GM12878 (cell line): ENCODE measurements at regions of chr15 and their contacts with region 1.

Region 1: DNA sequence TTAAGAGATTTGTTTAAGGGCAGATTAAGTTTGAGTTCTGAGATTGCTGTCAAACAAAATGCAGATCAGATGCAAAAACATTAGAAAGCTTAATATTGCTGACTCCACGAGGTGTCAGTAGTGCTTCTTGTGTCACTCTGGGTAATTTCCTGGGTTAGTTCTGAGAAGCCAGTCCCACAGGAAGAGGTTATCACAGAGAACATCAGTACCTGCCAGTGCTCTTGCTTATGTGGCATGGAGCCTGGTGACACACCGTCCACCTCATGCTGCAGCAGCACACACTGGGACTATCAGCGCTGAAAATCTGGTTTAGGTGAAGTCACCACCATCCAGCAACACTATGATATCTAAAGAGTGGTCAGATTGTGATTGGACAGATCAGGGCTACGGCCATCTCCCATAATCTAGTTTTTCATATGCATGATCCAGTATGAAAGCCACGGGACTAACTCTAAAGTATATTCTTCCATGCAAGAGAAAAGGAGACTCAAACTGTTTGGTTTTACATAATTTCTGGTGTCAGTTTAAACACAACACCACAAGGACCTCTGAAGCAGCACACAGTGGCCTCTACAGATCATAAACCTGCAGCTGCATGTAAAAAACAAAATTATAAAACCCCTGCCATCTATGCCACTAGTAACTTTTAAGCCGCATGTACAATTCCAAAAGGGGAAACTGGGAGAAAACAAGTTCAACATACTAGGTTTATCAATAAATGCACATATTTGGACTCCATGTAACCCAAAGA is 36.1 kb upstream of the MYO5C start:
- DNase-seq: peak; percentile 87
- ATAC-seq: peak; percentile 99
- H3K4me3 ChIP-seq: no peak overlapping the region
- H3K27ac ChIP-seq: peak overlapping the region; percentile 22
- H3K4me1 ChIP-seq: peaks cover 15% of the 10 kb centered on the region
- H3K27me3 ChIP-seq: no peaks in the 10 kb centered on the region
- CTCF ChIP-seq: peak; percentile 59 to 90 (median 78)
- EP300 ChIP-seq: no peak
- POLR2A ChIP-seq: no peak
- RAD21 ChIP-seq: peak; percentile 96

Region 2: GRCh38 chr15:52256366-52256765 is 75.3 kb before region 1 on chr15:
- CTCF ChIA-PET with region 1: interaction called, 52 read pairs
- POLR2A ChIA-PET with region 1: no interaction called
- RAD21 ChIA-PET with region 1: interaction called, 18 read pairs
- SMC1A ChIA-PET with region 1: interaction called, 33 read pairs
- in situ Hi-C with region 1: no loop called
- intact Hi-C with region 1: loop called (anchors 2 kb)
- DNase-seq: peak; percentile 76
- ATAC-seq: peak; percentile 71
- H3K4me3 ChIP-seq: no peak overlapping the region
- H3K27ac ChIP-seq: no peak overlapping the region
- H3K4me1 ChIP-seq: peaks cover 12% of the 10 kb centered on the region
- H3K27me3 ChIP-seq: no peaks in the 10 kb centered on the region
- CTCF ChIP-seq: peak; percentile 68 to 82 (median 71)
- EP300 ChIP-seq: no peak
- POLR2A ChIP-seq: no peak
- RAD21 ChIP-seq: peak; percentile 88

Region 3: GRCh38 chr15:52379395-52380106 is 47.9 kb after region 1 on chr15:
- CTCF ChIA-PET with region 1: interaction called, 3 read pairs
- POLR2A ChIA-PET with region 1: no interaction called
- RAD21 ChIA-PET with region 1: interaction called, 16 read pairs
- SMC1A ChIA-PET with region 1: interaction called, 6 read pairs
- in situ Hi-C with region 1: no loop called
- intact Hi-C with region 1: no loop called
- DNase-seq: peak; percentile 91
- ATAC-seq: peak; percentile 71
- H3K4me3 ChIP-seq: peak overlapping the region; percentile 60
- H3K27ac ChIP-seq: peak overlapping the region; percentile 98
- H3K4me1 ChIP-seq: peaks cover 54% of the 10 kb centered on the region
- H3K27me3 ChIP-seq: no peaks in the 10 kb centered on the region
- CTCF ChIP-seq: 0 out of 6 replicates have a peak, but pooled peaks of 1 of the 3 experiments have one; percentile 6
- EP300 ChIP-seq: peak; percentile 42 to 68; a peak in 3 of 4 replicates
- POLR2A ChIP-seq: peak; percentile 56
- RAD21 ChIP-seq: no peak

Region 4: DNA sequence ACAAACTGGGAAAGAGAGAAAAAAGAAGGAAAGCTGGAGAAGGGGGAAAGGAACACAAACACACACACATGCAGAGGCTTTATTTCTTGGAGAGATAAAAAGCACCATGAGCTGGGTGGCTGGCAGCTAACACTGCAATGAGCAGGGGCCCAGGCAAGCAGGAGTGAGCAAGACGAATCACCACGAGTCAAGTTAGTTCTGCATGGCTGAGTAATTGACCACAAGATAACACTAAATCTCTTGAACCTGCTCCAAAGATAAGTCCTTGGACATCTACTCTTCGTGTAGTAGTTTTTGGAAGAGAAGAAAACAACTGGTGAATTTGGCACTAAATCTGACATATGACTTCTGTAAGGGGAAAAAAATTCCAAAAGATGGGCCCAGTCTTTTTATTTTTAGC is 96.1 kb after region 1 on chr15:
- CTCF ChIA-PET with region 1: no interaction called
- POLR2A ChIA-PET with region 1: no interaction called
- RAD21 ChIA-PET with region 1: no interaction called
- SMC1A ChIA-PET with region 1: no interaction called
- in situ Hi-C with region 1: no loop called
- intact Hi-C with region 1: no loop called
- DNase-seq: no peak
- ATAC-seq: peak; percentile 81
- H3K4me3 ChIP-seq: no peak overlapping the region
- H3K27ac ChIP-seq: no peak overlapping the region
- H3K4me1 ChIP-seq: no peaks in the 10 kb centered on the region; the same call in 1 of the 2 replicates
- H3K27me3 ChIP-seq: no peaks in the 10 kb centered on the region
- CTCF ChIP-seq: no peak
- EP300 ChIP-seq: no peak
- POLR2A ChIP-seq: no peak
- RAD21 ChIP-seq: no peak

Region 5: GRCh38 chr15:52558196-52558595 is 226.5 kb after region 1 on chr15:
- CTCF ChIA-PET with region 1: interaction called, 5 read pairs
- POLR2A ChIA-PET with region 1: interaction called, 4 read pairs
- RAD21 ChIA-PET with region 1: interaction called, 10 read pairs
- SMC1A ChIA-PET with region 1: interaction called, 11 read pairs
- in situ Hi-C with region 1: no loop called
- intact Hi-C with region 1: no loop called
- DNase-seq: peak; percentile 84
- ATAC-seq: peak; percentile 83
- H3K4me3 ChIP-seq: peak overlapping the region; percentile 50; the same call in 1 of the 2 replicates
- H3K27ac ChIP-seq: peak overlapping the region; percentile 85
- H3K4me1 ChIP-seq: peaks cover 33% of the 10 kb centered on the region
- H3K27me3 ChIP-seq: no peaks in the 10 kb centered on the region
- CTCF ChIP-seq: no peak
- EP300 ChIP-seq: no peak
- POLR2A ChIP-seq: no peak
- RAD21 ChIP-seq: no peak

Region 6: DNA sequence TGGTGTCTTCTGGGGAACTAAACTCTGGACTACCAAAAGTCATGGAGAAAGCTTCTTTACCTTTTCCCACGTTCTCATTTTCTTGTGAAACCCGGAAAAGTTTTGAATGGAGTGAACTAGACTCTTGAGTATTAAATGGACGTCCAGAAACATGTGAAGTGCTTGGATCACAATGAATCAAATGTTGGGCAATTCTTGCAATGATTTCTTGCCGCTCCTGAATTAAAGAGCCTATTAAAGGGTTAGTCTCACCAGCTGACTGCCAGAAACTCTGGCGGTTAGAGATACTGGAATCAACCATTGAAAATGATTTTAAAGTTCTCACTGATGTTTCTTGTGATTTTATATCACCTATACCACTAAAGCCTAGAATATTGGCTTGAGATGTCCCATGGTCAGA is 277.9 kb after region 1 on chr15:
- CTCF ChIA-PET with region 1: no interaction called
- POLR2A ChIA-PET with region 1: no interaction called
- RAD21 ChIA-PET with region 1: no interaction called
- SMC1A ChIA-PET with region 1: no interaction called
- in situ Hi-C with region 1: no loop called
- intact Hi-C with region 1: loop called (anchors 5 kb)
- DNase-seq: no peak
- ATAC-seq: no peak
- H3K4me3 ChIP-seq: no peak overlapping the region
- H3K27ac ChIP-seq: no peak overlapping the region
- H3K4me1 ChIP-seq: no peaks in the 10 kb centered on the region
- H3K27me3 ChIP-seq: no peaks in the 10 kb centered on the region
- CTCF ChIP-seq: no peak
- EP300 ChIP-seq: no peak
- POLR2A ChIP-seq: no peak
- RAD21 ChIP-seq: no peak

Region 7: DNA sequence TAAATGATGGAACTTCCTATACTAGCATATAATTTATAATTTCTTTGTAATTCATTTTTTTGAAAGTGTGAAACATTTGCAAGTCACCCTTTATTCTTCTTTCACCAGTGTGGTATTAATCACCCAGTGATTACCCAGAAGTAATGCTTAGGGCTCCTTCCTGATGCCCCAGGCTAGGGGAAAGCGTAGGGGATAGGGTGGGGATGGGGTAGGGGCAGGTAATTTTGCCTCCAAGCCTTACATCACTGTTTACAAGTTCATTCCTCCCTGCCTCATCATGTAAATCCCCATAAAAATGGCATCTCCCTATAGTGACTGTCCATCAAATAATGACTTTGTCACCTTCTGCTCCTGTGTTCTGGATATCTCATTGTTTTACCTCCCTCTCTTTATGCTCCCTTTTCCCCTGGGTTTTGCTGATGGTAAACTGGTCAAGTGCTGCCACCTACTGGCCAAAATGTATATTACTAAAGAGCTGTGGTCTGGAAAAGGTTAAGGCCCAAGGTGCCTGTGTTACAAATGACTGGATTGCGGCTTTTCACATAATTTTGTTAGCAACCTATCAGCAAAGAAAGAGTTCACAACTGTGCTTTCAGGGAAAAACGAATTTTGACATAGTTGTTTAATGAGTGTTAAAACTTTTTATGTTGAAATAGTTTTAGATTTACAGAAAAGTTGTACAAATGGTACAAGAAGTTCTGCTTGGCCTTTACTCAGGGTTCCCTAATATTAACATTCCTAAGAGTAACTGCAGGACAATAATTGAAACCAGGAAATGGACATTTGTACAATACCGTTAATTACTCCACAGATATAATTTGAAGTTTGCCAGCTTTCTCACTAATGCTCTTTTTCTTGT is 403.8 kb after region 1 on chr15:
- CTCF ChIA-PET with region 1: interaction called, 47 read pairs
- POLR2A ChIA-PET with region 1: no interaction called
- RAD21 ChIA-PET with region 1: interaction called, 49 read pairs
- SMC1A ChIA-PET with region 1: interaction called, 50 read pairs
- in situ Hi-C with region 1: loop called (anchors 5 kb)
- intact Hi-C with region 1: loop called (anchors 1 kb)
- DNase-seq: peak; percentile 64
- ATAC-seq: peak; percentile 96
- H3K4me3 ChIP-seq: no peak overlapping the region
- H3K27ac ChIP-seq: no peak overlapping the region
- H3K4me1 ChIP-seq: no peaks in the 10 kb centered on the region
- H3K27me3 ChIP-seq: no peaks in the 10 kb centered on the region
- CTCF ChIP-seq: peak; percentile 58 to 88 (median 72)
- EP300 ChIP-seq: no peak
- POLR2A ChIP-seq: no peak
- RAD21 ChIP-seq: peak; percentile 98